ENCODE measurements at regions of chr7 and their contacts with region 1.

Region 1: DNA sequence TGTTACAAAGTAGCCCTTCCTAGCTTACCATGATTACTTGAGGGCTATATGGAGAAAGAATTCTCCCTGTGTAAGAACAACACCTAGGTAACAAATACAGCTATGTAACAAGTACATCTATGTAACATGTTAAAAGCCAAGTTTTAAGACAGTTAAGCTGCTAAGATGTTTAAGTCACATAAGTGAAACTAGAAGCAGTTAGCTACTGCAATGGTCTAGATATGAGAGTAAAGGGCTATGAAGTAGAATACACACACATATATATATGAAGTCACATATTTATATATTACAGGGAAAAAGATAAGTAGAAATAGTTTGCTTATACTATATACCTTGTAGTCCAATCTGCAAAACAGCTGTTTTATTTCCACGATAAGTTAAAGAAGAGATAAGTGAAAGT is 14.4 kb downstream of the POT1 start:
- DNase-seq: no peak
- ATAC-seq: no peak
- H3K4me3 ChIP-seq: no peak overlapping the region
- H3K4me3 Mint-ChIP-seq: no peak overlapping the region
- H3K27ac ChIP-seq: no peak overlapping the region
- H3K27ac Mint-ChIP-seq: no peak overlapping the region
- H3K4me1 ChIP-seq: no peaks in the 10 kb centered on the region
- H3K4me1 Mint-ChIP-seq: peaks cover 5 to 34% (median 16%) of the 10 kb centered on the region in 3 donors
- H3K27me3 ChIP-seq: no peaks in the 10 kb centered on the region
- H3K27me3 Mint-ChIP-seq: no peaks in the 10 kb centered on the region

Region 2: GRCh38 chr7:124856299-124856888 is 58.8 kb before region 1 on chr7:
- CTCF ChIA-PET with region 1: interaction called in 1 of 2 experiments, 7 read pairs
- POLR2A ChIA-PET with region 1: interaction called in 1 of 2 experiments, 13 read pairs
- DNase-seq: peak in 1 of 35 experiments; percentile 39
- ATAC-seq: no peak
- H3K4me3 ChIP-seq: no peak overlapping the region
- H3K4me3 Mint-ChIP-seq: no peak overlapping the region
- H3K27ac ChIP-seq: no peak overlapping the region
- H3K27ac Mint-ChIP-seq: peak overlapping the region in 1 of 2 donors; percentile 45
- H3K4me1 ChIP-seq: no peaks in the 10 kb centered on the region
- H3K4me1 Mint-ChIP-seq: peaks cover 0 to 2% (median 0%) of the 10 kb centered on the region in 3 donors
- H3K27me3 ChIP-seq: no peaks in the 10 kb centered on the region
- H3K27me3 Mint-ChIP-seq: no peaks in the 10 kb centered on the region